Esophagus muscularis mucosa (tissue), 4 donors: ENCODE measurements at regions of chr14 and their contacts with region 1.

Region 1: DNA sequence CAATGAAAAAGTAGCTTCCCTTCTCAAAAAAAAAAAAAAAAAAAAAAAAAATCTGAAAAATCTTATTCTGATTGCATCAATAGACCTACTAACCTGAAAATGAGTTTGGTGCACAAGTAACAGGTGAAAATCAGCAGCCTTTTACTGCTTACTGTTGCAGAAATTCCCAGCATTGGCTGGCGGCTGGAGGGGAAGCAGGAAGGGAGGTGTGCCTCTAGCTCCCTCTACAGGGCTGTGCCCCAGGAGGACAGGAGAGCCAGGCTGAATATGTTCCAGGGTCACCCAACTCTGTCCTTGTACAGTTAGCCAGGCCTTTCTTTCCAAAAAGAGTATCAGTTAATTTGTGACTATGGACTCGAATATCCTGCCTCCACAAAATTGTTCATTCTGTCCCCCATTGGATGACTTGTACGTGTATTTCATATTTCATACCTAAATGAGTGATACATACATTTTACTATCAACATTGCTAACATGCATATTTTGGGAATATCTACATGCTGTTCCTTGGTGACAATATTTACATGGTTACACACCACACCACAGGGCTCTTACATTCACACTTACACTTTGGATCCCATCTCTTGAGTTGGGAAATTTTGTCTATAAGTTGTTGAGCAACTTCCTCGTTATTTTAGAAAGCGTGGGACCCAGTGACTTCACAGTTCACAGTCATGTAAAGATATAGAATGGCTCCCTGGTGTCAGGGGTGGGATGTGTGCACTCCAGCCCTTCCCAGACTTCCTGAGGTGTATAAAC is 124.8 kb downstream of the SAMD4A start:
- DNase-seq: no peak
- H3K4me3 ChIP-seq: no peak overlapping the region
- H3K27ac ChIP-seq: peak overlapping the region; percentile 5 to 48 (median 18)
- H3K4me1 ChIP-seq: peaks cover 39 to 56% (median 51%) of the 10 kb centered on the region in 4 donors
- H3K27me3 ChIP-seq: no peaks in the 10 kb centered on the region
- CTCF ChIP-seq: peak; percentile 83 to 86 (median 84)
- EP300 ChIP-seq: no peak
- POLR2A ChIP-seq: no peak

Region 2: GRCh38 chr14:54756656-54757392 is 65.1 kb after region 1 on chr14:
- intact Hi-C with region 1: no loop called
- DNase-seq: no peak
- H3K4me3 ChIP-seq: no peak overlapping the region
- H3K27ac ChIP-seq: no peak overlapping the region
- H3K4me1 ChIP-seq: peaks cover 3 to 18% (median 11%) of the 10 kb centered on the region in 4 donors
- H3K27me3 ChIP-seq: no peaks in the 10 kb centered on the region
- CTCF ChIP-seq: no peak
- EP300 ChIP-seq: no peak
- POLR2A ChIP-seq: no peak

Region 3: GRCh38 chr14:54773171-54773975 is 81.7 kb after region 1 on chr14:
- intact Hi-C with region 1: loop called (anchors 2 kb)
- DNase-seq: peak; percentile 96
- H3K4me3 ChIP-seq: peak overlapping the region in 2 of 4 donors; percentile 9 to 20
- H3K27ac ChIP-seq: peak overlapping the region; percentile 86 to 92 (median 90)
- H3K4me1 ChIP-seq: peaks cover 46 to 71% (median 66%) of the 10 kb centered on the region in 4 donors
- H3K27me3 ChIP-seq: no peaks in the 10 kb centered on the region
- CTCF ChIP-seq: peak; percentile 68 to 78 (median 72)
- EP300 ChIP-seq: peak; percentile 83
- POLR2A ChIP-seq: no peak